CD4-positive, alpha-beta T cell (primary cell): ENCODE measurements at regions of chr10 and their contacts with region 1.

Region 1: GRCh38 chr10:100670828-100671479 is 74.4 kb upstream of the PAX2 start:
- DNase-seq: peak; percentile 15 to 72 (median 49)
- ATAC-seq: peak; percentile 66
- H3K4me3 ChIP-seq: no peak overlapping the region
- H3K4me3 Mint-ChIP-seq: no peak overlapping the region
- H3K27ac ChIP-seq: no peak overlapping the region
- H3K27ac Mint-ChIP-seq: no peak overlapping the region
- H3K4me1 ChIP-seq: peaks cover 6% of the 10 kb centered on the region
- H3K4me1 Mint-ChIP-seq: peaks cover 9% of the 10 kb centered on the region
- H3K27me3 ChIP-seq: peaks cover 58 to 75% of the 10 kb centered on the region in 2 experiments
- H3K27me3 Mint-ChIP-seq: peaks cover 84% of the 10 kb centered on the region
- CTCF ChIP-seq: peak; percentile 68

Region 2: GRCh38 chr10:100878291-100878910 is 207.4 kb after region 1 on chr10:
- CTCF ChIA-PET with region 1: no interaction called
- POLR2A ChIA-PET with region 1: no interaction called
- intact Hi-C with region 1: loop called in 1 of 2 experiments (anchors 5 kb)
- DNase-seq: peak in 5 of 14 experiments; percentile 4 to 45 (median 29)
- ATAC-seq: peak; percentile 73
- H3K4me3 ChIP-seq: no peak overlapping the region
- H3K4me3 Mint-ChIP-seq: no peak overlapping the region
- H3K27ac ChIP-seq: no peak overlapping the region
- H3K27ac Mint-ChIP-seq: no peak overlapping the region
- H3K4me1 ChIP-seq: no peaks in the 10 kb centered on the region
- H3K4me1 Mint-ChIP-seq: no peaks in the 10 kb centered on the region
- H3K27me3 ChIP-seq: peaks cover 0 to 2% of the 10 kb centered on the region in 2 experiments
- H3K27me3 Mint-ChIP-seq: peaks cover 11% of the 10 kb centered on the region
- CTCF ChIP-seq: no peak